CD8-positive, alpha-beta T cell (primary cell): ENCODE measurements at regions of chr4 and their contacts with region 1.

Region 1: GRCh38 chr4:42594888-42595287 is 62.0 kb downstream of the ATP8A1 start:
- DNase-seq: no peak
- ATAC-seq: no peak
- H3K4me3 ChIP-seq: no peak overlapping the region
- H3K4me3 Mint-ChIP-seq: no peak overlapping the region
- H3K27ac ChIP-seq: no peak overlapping the region
- H3K27ac Mint-ChIP-seq: no peak overlapping the region
- H3K4me1 ChIP-seq: no peaks in the 10 kb centered on the region
- H3K4me1 Mint-ChIP-seq: peaks cover 2% of the 10 kb centered on the region
- H3K27me3 ChIP-seq: no peaks in the 10 kb centered on the region
- H3K27me3 Mint-ChIP-seq: no peaks in the 10 kb centered on the region
- CTCF ChIP-seq: no peak

Region 2: GRCh38 chr4:42607011-42607726 is 12.3 kb after region 1 on chr4:
- CTCF ChIA-PET with region 1: no interaction called
- POLR2A ChIA-PET with region 1: no interaction called
- intact Hi-C with region 1: loop called in 1 of 2 experiments (anchors 2 kb)
- DNase-seq: no peak
- ATAC-seq: no peak
- H3K4me3 ChIP-seq: no peak overlapping the region
- H3K4me3 Mint-ChIP-seq: no peak overlapping the region
- H3K27ac ChIP-seq: no peak overlapping the region
- H3K27ac Mint-ChIP-seq: no peak overlapping the region
- H3K4me1 ChIP-seq: no peaks in the 10 kb centered on the region
- H3K4me1 Mint-ChIP-seq: peaks cover 40% of the 10 kb centered on the region
- H3K27me3 ChIP-seq: no peaks in the 10 kb centered on the region
- H3K27me3 Mint-ChIP-seq: no peaks in the 10 kb centered on the region
- CTCF ChIP-seq: no peak